ENCODE measurements at regions of chr15 and their contacts with region 1.

Region 1: DNA sequence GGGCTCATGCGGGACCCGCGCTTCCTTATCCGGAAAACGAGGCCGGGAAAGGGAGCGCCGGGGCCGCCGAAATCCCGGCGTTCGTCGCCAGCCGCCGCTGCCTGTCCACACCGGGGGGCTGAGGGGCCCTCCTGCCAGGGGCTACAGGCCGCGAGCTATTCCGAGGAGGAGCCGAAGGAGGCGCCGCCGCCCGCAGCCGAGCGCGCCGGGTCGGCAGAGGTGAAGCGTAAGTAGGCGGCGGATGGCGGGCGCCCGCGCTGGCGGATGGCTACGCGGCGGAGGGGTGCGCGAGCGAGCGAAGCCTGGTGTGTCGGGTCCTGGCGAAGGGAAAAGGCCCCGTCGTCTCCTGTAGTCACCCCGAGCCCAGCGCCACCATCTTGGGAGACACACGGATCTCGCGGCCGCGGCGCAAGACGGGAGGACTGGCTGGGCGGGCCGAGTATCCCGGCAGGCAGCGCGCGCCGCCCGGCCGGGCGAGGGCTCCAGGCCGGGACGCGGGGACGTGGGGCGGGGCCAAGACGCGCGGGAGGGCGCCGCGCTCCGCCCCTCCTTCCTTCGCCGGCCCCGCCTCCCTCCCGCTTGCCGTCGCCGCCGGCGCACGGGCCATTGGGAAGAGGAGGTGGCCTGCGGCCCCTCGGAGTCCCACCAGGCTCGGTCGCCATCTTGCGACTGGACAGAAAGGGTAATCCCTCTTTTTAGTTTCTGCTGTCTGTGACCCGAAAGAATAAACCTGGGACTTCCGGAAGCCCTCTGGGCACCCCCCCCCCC is at the start of gene UBE3A:
- DNase-seq: peak; percentile 93
- ATAC-seq: peak; percentile 92
- H3K4me3 Mint-ChIP-seq: peak within 1 kb of the TSS; percentile 88
- H3K27ac Mint-ChIP-seq: peak within 1 kb of the TSS; percentile 91
- H3K4me1 Mint-ChIP-seq: peaks cover 44% of the 10 kb centered on the region
- H3K27me3 Mint-ChIP-seq: no peaks in the 10 kb centered on the region
- CTCF ChIP-seq: no peak
- total RNA-seq, gene UBE3A: 106 and 122 TPM in 2 replicates

Region 2: GRCh38 chr15:23881291-23881690 is 1557.5 kb before region 1 on chr15:
- CTCF ChIA-PET with region 1: no interaction called
- POLR2A ChIA-PET with region 1: no interaction called
- intact Hi-C with region 1: no loop called
- DNase-seq: no peak
- ATAC-seq: no peak
- H3K4me3 Mint-ChIP-seq: no peak overlapping the region
- H3K27ac Mint-ChIP-seq: no peak overlapping the region
- H3K4me1 Mint-ChIP-seq: no peaks in the 10 kb centered on the region
- H3K27me3 Mint-ChIP-seq: no peaks in the 10 kb centered on the region
- CTCF ChIP-seq: no peak

Region 3: GRCh38 chr15:24956111-24956838 is 482.5 kb before region 1 on chr15:
- CTCF ChIA-PET with region 1: no interaction called
- POLR2A ChIA-PET with region 1: no interaction called
- intact Hi-C with region 1: loop called (anchors 1 kb)
- DNase-seq: peak; percentile 40
- ATAC-seq: peak; percentile 73
- H3K4me3 Mint-ChIP-seq: peak overlapping the region; percentile 91
- H3K27ac Mint-ChIP-seq: peak overlapping the region; percentile 84
- H3K4me1 Mint-ChIP-seq: peaks cover 23% of the 10 kb centered on the region
- H3K27me3 Mint-ChIP-seq: no peaks in the 10 kb centered on the region
- CTCF ChIP-seq: no peak

Region 4: DNA sequence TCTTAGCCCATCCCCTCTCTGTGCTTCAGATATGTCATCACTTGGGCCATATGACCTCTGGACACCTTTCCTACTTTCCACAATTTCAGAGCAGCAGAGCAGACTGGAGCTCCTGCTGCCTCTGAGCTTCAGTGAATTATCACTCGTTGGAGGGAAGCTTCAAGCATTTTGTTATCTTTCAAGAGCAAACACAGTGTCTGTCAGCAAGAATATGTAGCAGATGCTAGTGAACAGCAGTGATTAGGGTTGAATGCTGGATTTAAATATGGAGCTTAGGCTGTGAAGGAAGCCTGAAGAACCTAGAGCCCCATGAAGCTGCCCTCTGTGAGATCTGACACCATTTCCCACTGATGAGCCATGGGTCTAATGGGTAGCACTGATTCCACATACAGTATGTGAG is 115.4 kb before region 1 on chr15:
- CTCF ChIA-PET with region 1: no interaction called
- POLR2A ChIA-PET with region 1: no interaction called
- intact Hi-C with region 1: no loop called
- DNase-seq: no peak
- ATAC-seq: no peak
- H3K4me3 Mint-ChIP-seq: no peak overlapping the region
- H3K27ac Mint-ChIP-seq: no peak overlapping the region
- H3K4me1 Mint-ChIP-seq: no peaks in the 10 kb centered on the region
- H3K27me3 Mint-ChIP-seq: no peaks in the 10 kb centered on the region
- CTCF ChIP-seq: no peak

Region 5: GRCh38 chr15:25372298-25372697 is 66.5 kb before region 1 on chr15:
- CTCF ChIA-PET with region 1: no interaction called
- POLR2A ChIA-PET with region 1: no interaction called
- intact Hi-C with region 1: loop called (anchors 2 kb)
- DNase-seq: no peak
- ATAC-seq: no peak
- H3K4me3 Mint-ChIP-seq: no peak overlapping the region
- H3K27ac Mint-ChIP-seq: no peak overlapping the region
- H3K4me1 Mint-ChIP-seq: peaks cover 2% of the 10 kb centered on the region
- H3K27me3 Mint-ChIP-seq: no peaks in the 10 kb centered on the region
- CTCF ChIP-seq: no peak

Region 6: GRCh38 chr15:25426896-25427610 is 11.7 kb before region 1 on chr15:
- CTCF ChIA-PET with region 1: no interaction called
- POLR2A ChIA-PET with region 1: interaction called, 3 read pairs
- intact Hi-C with region 1: loop called (anchors 1 kb)
- DNase-seq: no peak
- ATAC-seq: no peak
- H3K4me3 Mint-ChIP-seq: no peak overlapping the region
- H3K27ac Mint-ChIP-seq: no peak overlapping the region
- H3K4me1 Mint-ChIP-seq: peaks cover 60% of the 10 kb centered on the region
- H3K27me3 Mint-ChIP-seq: no peaks in the 10 kb centered on the region
- CTCF ChIP-seq: no peak

Region 7: GRCh38 chr15:26082221-26083109 is 643.7 kb after region 1 on chr15:
- CTCF ChIA-PET with region 1: no interaction called
- POLR2A ChIA-PET with region 1: no interaction called
- intact Hi-C with region 1: loop called (anchors 1 kb)
- DNase-seq: peak; percentile 78
- ATAC-seq: peak; percentile 96
- H3K4me3 Mint-ChIP-seq: peak overlapping the region; percentile 82
- H3K27ac Mint-ChIP-seq: peak overlapping the region; percentile 90
- H3K4me1 Mint-ChIP-seq: peaks cover 29% of the 10 kb centered on the region
- H3K27me3 Mint-ChIP-seq: no peaks in the 10 kb centered on the region
- CTCF ChIP-seq: no peak

Measured in activated B cell treated with CpG ODN at 0.5 μM for 24 hours (primary cell).